ENCODE measurements at regions of chr17 and their contacts with region 1.

Region 1: GRCh38 chr17:58006924-58007780 is at the start of gene SRSF1:
- DNase-seq: peak; percentile 98
- H3K4me3 ChIP-seq: peak within 1 kb of the TSS; percentile 85
- H3K4me3 Mint-ChIP-seq: peak within 1 kb of the TSS; percentile 97
- H3K27ac Mint-ChIP-seq: peak within 1 kb of the TSS; percentile 100
- H3K4me1 ChIP-seq: peaks cover 21% of the 10 kb centered on the region
- H3K4me1 Mint-ChIP-seq: peaks cover 20% of the 10 kb centered on the region
- H3K27me3 ChIP-seq: no peaks in the 10 kb centered on the region
- H3K27me3 Mint-ChIP-seq: no peaks in the 10 kb centered on the region
- CTCF ChIP-seq: no peak
- total RNA-seq, gene SRSF1: 308 and 325 TPM in 2 replicates

Region 2: GRCh38 chr17:58020401-58020800 is 13.2 kb after region 1 on chr17:
- CTCF ChIA-PET with region 1: interaction called, 3 read pairs
- POLR2A ChIA-PET with region 1: interaction called, 10 read pairs
- intact Hi-C with region 1: loop called (anchors 1 kb)
- DNase-seq: no peak
- H3K4me3 ChIP-seq: no peak overlapping the region
- H3K4me3 Mint-ChIP-seq: no peak overlapping the region
- H3K27ac Mint-ChIP-seq: no peak overlapping the region
- H3K4me1 ChIP-seq: peaks cover 27% of the 10 kb centered on the region
- H3K4me1 Mint-ChIP-seq: peaks cover 19% of the 10 kb centered on the region
- H3K27me3 ChIP-seq: no peaks in the 10 kb centered on the region
- H3K27me3 Mint-ChIP-seq: no peaks in the 10 kb centered on the region
- CTCF ChIP-seq: no peak

Region 3: DNA sequence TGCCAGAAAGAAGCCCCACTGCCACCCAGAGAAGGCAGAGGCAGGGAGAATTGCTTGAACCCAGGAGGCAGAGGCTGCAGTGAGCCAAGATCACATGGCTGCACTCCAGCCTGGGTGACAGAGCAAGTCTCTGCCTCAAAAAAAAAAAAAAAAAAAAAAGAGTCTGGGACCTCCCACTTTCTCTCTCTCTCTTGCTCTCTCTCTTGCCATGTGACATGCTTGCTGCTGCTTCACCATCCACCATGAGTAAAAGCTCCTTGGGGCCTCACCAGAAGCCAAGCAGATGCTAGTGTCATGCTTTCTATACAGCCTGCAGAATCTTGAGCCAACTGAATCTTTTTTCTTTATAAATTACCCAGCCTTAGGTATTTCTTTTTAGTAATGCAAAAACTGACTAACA is 21.4 kb after region 1 on chr17:
- CTCF ChIA-PET with region 1: no interaction called
- POLR2A ChIA-PET with region 1: interaction called, 5 read pairs
- intact Hi-C with region 1: loop called (anchors 1 kb)
- DNase-seq: no peak
- H3K4me3 ChIP-seq: no peak overlapping the region
- H3K4me3 Mint-ChIP-seq: no peak overlapping the region
- H3K27ac Mint-ChIP-seq: no peak overlapping the region
- H3K4me1 ChIP-seq: peaks cover 4% of the 10 kb centered on the region
- H3K4me1 Mint-ChIP-seq: peaks cover under 1% of the 10 kb centered on the region
- H3K27me3 ChIP-seq: no peaks in the 10 kb centered on the region
- H3K27me3 Mint-ChIP-seq: no peaks in the 10 kb centered on the region
- CTCF ChIP-seq: no peak

Measured in Caco-2 (cell line).